A549 (cell line): ENCODE measurements at regions of chr3 and their contacts with region 1.

Region 1: GRCh38 chr3:57434041-57434440 is 110.1 kb downstream of the DNAH12 start:
- DNase-seq: peak; percentile 27 to 47
- ATAC-seq: peak; percentile 77 to 79; a peak in 5 of 6 replicates
- H3K4me3 ChIP-seq: no peak overlapping the region
- H3K27ac ChIP-seq: no peak overlapping the region
- H3K4me1 ChIP-seq: 0 out of 3 replicates have a peak, but pooled peaks cover 3% of the 10 kb centered on the region
- CTCF ChIP-seq: peak; percentile 39; the same call in 2 of the 3 replicates
- EP300 ChIP-seq: no peak
- POLR2A ChIP-seq: no peak
- RAD21 ChIP-seq: peak; percentile 27 to 46; a peak in 3 of 5 replicates

Region 2: DNA sequence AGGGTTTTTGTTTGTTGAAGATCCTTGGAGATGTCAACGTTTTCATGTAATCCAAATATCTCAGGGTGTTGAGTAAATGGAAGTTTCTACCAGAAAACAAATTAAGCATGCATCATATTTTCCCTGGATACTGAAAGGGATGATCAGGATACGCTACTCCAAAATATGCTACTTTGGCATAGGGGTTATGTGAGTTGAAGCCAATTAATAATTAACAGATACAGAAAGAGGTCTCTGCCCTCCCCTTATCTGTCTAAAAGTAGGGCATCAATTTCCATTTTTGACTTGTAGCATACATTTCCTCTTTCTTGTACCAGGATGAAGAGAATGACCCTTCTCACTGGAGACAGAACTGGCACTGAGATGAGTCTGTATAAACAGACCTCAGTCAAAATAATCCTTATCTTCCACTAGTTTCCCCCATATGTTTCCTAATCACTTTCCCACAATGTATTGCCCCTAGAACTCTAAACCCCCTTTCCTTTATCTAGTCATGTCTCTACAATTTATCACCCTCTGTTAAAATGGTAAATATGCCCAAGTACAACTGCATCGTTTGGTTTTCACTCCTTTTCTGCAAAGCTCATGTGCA is 124.2 kb before region 1 on chr3:
- CTCF ChIA-PET with region 1: no interaction called
- POLR2A ChIA-PET with region 1: no interaction called
- DNase-seq: no peak
- ATAC-seq: no peak
- H3K4me3 ChIP-seq: no peak overlapping the region
- H3K27ac ChIP-seq: no peak overlapping the region
- H3K4me1 ChIP-seq: no peaks in the 10 kb centered on the region
- CTCF ChIP-seq: no peak
- EP300 ChIP-seq: no peak
- POLR2A ChIP-seq: no peak
- RAD21 ChIP-seq: no peak

Region 3: DNA sequence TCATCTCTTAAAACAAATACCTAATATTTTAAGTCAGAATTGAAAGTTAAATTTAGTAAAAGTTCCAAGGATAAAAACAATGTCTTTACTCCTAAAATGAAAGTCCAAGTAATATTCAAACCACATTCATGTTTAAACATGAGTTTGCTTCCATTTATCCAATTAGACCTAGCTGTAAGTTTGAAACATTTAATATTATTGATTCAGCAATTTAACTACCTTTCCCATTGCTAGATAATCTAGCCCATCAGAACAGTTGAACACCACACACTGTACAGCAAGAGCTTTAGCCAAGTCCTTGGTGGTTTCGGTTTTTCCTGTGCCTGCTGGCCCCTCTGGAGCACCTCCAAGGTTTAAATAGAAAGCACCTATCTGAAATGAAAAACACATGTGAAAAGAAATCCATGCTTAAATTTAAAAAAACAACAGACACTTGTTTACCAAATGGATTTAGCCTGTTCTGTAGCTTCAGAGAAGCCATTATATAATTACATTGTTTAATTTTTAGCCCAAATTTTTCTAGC is 12.3 kb after region 1 on chr3:
- CTCF ChIA-PET with region 1: interaction called, 11 read pairs
- POLR2A ChIA-PET with region 1: interaction called, 7 read pairs
- DNase-seq: no peak
- ATAC-seq: no peak
- H3K4me3 ChIP-seq: no peak overlapping the region
- H3K27ac ChIP-seq: peak overlapping the region in 1 of 2 experiments; percentile 42; a peak in 1 of 6 replicates
- H3K4me1 ChIP-seq: peaks cover 11% of the 10 kb centered on the region
- CTCF ChIP-seq: no peak
- EP300 ChIP-seq: no peak
- POLR2A ChIP-seq: no peak
- RAD21 ChIP-seq: no peak